ENCODE measurements at regions of chr1 and their contacts with region 1.

Region 1: GRCh38 chr1:233885196-233886028 is 19.1 kb upstream of the SLC35F3 start:
- DNase-seq: no peak
- H3K4me3 ChIP-seq: no peak overlapping the region
- H3K4me3 Mint-ChIP-seq: no peak overlapping the region
- H3K27ac Mint-ChIP-seq: no peak overlapping the region
- H3K4me1 ChIP-seq: no peaks in the 10 kb centered on the region
- H3K4me1 Mint-ChIP-seq: no peaks in the 10 kb centered on the region
- H3K27me3 ChIP-seq: no peaks in the 10 kb centered on the region
- H3K27me3 Mint-ChIP-seq: peaks cover 3% of the 10 kb centered on the region
- CTCF ChIP-seq: no peak

Region 2: DNA sequence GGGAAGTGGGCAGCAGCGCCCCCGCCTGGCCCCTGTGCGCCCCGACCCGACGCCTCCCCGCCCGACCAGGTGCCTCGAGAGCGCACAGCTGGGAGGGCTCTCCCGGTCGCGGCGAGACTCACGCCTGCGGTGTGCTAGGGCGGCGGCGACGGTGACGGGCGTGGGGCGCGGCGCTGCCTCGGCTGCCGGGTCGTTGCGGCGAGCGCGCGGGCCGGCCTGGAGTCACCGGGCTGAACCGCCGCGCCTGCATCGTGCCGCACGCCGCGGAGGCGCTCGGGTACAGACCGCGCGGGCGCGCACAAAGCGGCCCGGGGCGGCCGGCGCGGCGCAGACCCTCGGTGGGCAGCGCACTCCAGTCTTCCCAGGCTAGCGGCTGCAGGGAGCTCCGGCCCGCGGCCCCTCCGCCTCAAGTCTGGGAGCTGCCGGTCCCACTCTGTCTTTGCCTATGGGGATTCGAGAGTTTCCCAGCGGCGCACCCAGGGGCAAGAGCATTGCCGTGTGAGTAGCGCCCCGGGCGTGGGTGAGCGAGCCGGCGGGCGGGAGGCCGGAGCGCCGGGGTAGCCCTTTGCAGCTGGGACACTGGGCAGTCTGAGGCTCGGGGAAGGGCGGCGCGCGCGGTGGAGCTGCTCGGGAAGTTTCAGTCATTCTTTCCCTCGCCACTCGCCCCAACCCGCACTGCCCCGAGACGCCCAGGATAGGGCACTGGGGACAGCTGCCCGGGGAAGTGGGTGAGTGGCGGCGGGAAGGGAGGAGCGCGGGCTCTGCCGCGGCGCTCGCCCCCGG is 19.4 kb after region 1 on chr1 and contains the start of gene SLC35F3:
- CTCF ChIA-PET with region 1: no interaction called
- POLR2A ChIA-PET with region 1: no interaction called
- intact Hi-C with region 1: no loop called
- DNase-seq: no peak
- H3K4me3 ChIP-seq: no peak within 1 kb of the TSS
- H3K4me3 Mint-ChIP-seq: no peak within 1 kb of the TSS
- H3K27ac Mint-ChIP-seq: no peak within 1 kb of the TSS
- H3K4me1 ChIP-seq: no peaks in the 10 kb centered on the region
- H3K4me1 Mint-ChIP-seq: no peaks in the 10 kb centered on the region
- H3K27me3 ChIP-seq: no peaks in the 10 kb centered on the region
- H3K27me3 Mint-ChIP-seq: peaks cover 3% of the 10 kb centered on the region
- CTCF ChIP-seq: no peak
- total RNA-seq, gene SLC35F3: not detected in 2 replicates

Region 3: GRCh38 chr1:233945573-233945972 is 60.2 kb after region 1 on chr1:
- CTCF ChIA-PET with region 1: no interaction called
- POLR2A ChIA-PET with region 1: no interaction called
- intact Hi-C with region 1: loop called (anchors 10 kb)
- DNase-seq: no peak
- H3K4me3 ChIP-seq: no peak overlapping the region
- H3K4me3 Mint-ChIP-seq: no peak overlapping the region
- H3K27ac Mint-ChIP-seq: no peak overlapping the region
- H3K4me1 ChIP-seq: no peaks in the 10 kb centered on the region
- H3K4me1 Mint-ChIP-seq: no peaks in the 10 kb centered on the region
- H3K27me3 ChIP-seq: no peaks in the 10 kb centered on the region; the same call in 1 of the 2 replicates
- H3K27me3 Mint-ChIP-seq: peaks cover 10% of the 10 kb centered on the region
- CTCF ChIP-seq: no peak